ENCODE measurements at regions of chr6 and their contacts with region 1.

Region 1: DNA sequence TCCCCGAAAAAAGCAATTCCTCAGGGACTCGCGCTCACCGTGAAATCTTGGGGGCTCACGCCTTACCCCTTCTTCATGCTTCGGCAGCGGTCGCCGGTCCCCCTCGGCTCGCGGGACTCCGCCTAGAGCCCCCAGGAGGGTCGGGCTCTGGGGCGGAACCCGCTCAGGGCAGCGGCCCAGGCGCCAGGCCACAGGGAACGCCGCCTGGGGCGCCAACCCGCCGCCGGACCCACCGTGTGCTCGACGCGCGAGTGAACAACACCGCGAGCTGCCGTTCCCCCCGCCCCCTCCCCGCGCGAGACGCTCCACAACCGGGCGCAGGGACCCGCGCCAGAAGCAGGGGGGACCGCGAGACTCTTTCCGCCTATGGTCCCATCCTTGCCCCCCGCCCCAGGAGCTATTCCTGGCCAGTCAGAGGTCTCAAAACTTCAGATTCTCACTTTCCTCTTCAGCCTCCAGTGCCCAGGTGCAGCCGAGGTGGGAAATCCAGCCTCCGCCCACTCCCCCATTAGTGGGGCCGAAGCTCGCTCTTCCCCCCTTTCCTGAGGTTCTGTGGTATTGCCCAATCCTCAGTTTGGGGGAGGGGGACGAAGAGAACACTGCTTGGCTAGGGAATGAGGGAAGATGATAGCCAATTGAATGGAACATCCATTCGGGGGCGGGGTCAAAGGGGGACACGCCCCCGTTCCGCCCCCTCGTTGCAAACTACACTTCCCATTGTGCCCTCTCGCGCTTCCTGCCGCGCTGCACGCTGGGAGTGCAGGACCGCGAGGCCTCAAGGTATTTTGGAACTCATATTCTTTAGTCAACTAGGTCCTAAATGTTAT is at the start of gene WASF1:
- DNase-seq: peak; percentile 92
- ATAC-seq: peak; percentile 80
- H3K4me3 Mint-ChIP-seq: no peak within 1 kb of the TSS
- H3K27ac Mint-ChIP-seq: peak within 1 kb of the TSS; percentile 86
- H3K4me1 Mint-ChIP-seq: peaks cover 7% of the 10 kb centered on the region
- H3K27me3 Mint-ChIP-seq: no peaks in the 10 kb centered on the region
- CTCF ChIP-seq: no peak
- total RNA-seq, gene WASF1: 5.1 and 6.2 TPM in 2 replicates

Region 2: DNA sequence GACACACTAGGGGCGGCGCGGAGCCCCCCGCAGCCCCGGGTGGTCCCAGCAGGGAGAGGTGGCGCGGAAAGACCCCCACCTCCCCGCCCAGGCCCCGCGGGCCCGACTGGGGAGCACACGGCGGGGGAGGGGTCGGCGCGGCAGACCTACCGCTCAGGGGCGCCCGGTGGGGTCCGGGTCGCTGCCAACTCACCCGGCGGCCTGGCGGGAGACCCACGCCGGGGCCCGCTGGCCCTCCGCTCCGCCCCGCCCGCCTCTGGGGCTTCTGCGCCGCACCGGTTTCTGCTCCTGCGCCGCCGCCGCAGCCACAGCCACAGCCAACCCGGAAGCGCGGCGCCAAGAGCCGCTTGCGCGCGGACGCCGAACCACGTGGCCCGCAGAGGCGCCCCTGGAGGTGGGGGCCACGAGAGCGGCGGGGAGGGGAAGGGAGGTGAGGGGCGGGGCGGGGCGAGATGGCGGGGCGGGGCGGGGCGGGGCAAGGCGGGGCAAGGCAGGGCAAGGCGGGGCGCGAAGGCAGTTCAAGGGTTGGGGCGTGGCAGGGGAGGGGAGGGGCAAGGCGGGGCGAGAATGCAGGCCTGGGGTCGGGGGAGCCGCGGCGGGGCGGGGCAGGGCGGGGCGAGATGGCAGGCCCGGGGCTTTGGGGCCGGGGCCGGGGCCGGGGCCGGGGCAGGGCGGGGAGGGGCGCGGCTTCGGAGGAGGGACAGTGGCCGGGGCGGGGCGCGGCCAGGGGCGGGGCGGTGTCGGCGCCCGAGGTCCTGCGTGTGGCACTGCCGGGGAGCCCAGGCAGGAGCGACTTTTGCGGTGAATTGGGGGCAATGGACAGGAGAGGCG is 696.5 kb before region 1 on chr6 and contains the start of gene ZBTB24:
- CTCF ChIA-PET with region 1: no interaction called
- POLR2A ChIA-PET with region 1: no interaction called
- intact Hi-C with region 1: loop called (anchors 1 kb)
- DNase-seq: peak; percentile 81
- ATAC-seq: peak; percentile 82
- H3K4me3 Mint-ChIP-seq: peak within 1 kb of the TSS; percentile 95
- H3K27ac Mint-ChIP-seq: peak within 1 kb of the TSS; percentile 85
- H3K4me1 Mint-ChIP-seq: peaks cover 52% of the 10 kb centered on the region
- H3K27me3 Mint-ChIP-seq: no peaks in the 10 kb centered on the region
- CTCF ChIP-seq: no peak
- total RNA-seq, gene ZBTB24: 22.8 and 25.4 TPM in 2 replicates

Region 3: DNA sequence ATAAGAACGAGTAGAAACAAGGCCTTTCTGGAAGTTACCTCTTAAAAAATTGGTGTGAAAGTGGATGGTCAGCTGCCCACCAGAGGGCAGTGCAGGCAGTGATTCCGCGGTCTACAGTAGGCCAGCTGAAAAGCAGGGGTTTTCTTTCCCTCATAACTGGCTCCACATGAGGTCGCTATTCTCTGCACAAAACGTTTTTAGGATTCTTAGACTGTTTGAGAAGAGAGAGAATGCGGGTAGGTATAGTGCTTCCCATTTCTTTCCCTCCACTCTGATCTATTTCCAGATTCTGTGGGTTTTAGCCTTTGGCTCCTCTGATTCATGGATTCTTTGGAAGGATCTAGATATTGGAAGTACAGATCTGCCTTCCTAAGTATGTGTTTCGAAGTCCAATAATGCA is 474.4 kb before region 1 on chr6:
- CTCF ChIA-PET with region 1: no interaction called
- POLR2A ChIA-PET with region 1: no interaction called
- intact Hi-C with region 1: loop called (anchors 1 kb)
- DNase-seq: peak; percentile 70
- ATAC-seq: peak; percentile 98
- H3K4me3 Mint-ChIP-seq: no peak overlapping the region
- H3K27ac Mint-ChIP-seq: no peak overlapping the region
- H3K4me1 Mint-ChIP-seq: peaks cover 52% of the 10 kb centered on the region
- H3K27me3 Mint-ChIP-seq: no peaks in the 10 kb centered on the region
- CTCF ChIP-seq: peak; percentile 98

Region 4: DNA sequence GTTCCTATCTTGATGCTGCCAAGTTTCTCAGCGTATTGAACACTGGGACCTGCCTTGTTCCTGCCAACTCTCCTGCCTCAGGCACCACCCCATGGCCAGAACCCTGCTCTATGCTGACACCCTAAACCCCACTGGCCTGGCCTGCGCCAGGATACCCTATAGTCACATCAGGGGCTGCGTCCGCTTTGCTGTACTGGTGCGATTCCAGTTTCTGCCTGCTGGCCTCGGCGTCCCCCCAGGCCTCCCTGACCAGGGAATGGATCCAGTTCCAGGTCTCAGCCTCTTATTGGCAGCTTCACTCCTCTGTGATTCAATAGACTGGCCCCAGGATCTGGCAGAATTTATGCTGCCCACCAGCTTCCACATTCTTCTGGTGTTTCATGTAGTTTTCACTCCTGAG is 146.5 kb before region 1 on chr6:
- CTCF ChIA-PET with region 1: no interaction called
- POLR2A ChIA-PET with region 1: no interaction called
- intact Hi-C with region 1: no loop called
- DNase-seq: no peak
- ATAC-seq: no peak
- H3K4me3 Mint-ChIP-seq: no peak overlapping the region
- H3K27ac Mint-ChIP-seq: no peak overlapping the region
- H3K4me1 Mint-ChIP-seq: no peaks in the 10 kb centered on the region
- H3K27me3 Mint-ChIP-seq: no peaks in the 10 kb centered on the region
- CTCF ChIP-seq: no peak

Region 5: GRCh38 chr6:110101885-110102284 is 77.7 kb before region 1 on chr6:
- CTCF ChIA-PET with region 1: no interaction called
- POLR2A ChIA-PET with region 1: no interaction called
- intact Hi-C with region 1: loop called (anchors 5 kb)
- DNase-seq: no peak
- ATAC-seq: peak; percentile 96
- H3K4me3 Mint-ChIP-seq: no peak overlapping the region
- H3K27ac Mint-ChIP-seq: peak overlapping the region; percentile 53
- H3K4me1 Mint-ChIP-seq: peaks cover 11% of the 10 kb centered on the region
- H3K27me3 Mint-ChIP-seq: no peaks in the 10 kb centered on the region
- CTCF ChIP-seq: no peak

Region 6: GRCh38 chr6:110207652-110208051 is 28.0 kb after region 1 on chr6:
- CTCF ChIA-PET with region 1: interaction called, 33 read pairs
- POLR2A ChIA-PET with region 1: interaction called, 86 read pairs
- intact Hi-C with region 1: loop called (anchors 1 kb)
- DNase-seq: no peak
- ATAC-seq: no peak
- H3K4me3 Mint-ChIP-seq: no peak overlapping the region
- H3K27ac Mint-ChIP-seq: no peak overlapping the region
- H3K4me1 Mint-ChIP-seq: peaks cover 46% of the 10 kb centered on the region
- H3K27me3 Mint-ChIP-seq: no peaks in the 10 kb centered on the region
- CTCF ChIP-seq: no peak

Region 7: GRCh38 chr6:110233770-110234374 is 54.3 kb after region 1 on chr6:
- CTCF ChIA-PET with region 1: interaction called, 4 read pairs
- POLR2A ChIA-PET with region 1: interaction called, 4 read pairs
- intact Hi-C with region 1: loop called (anchors 1 kb)
- DNase-seq: no peak
- ATAC-seq: peak; percentile 78
- H3K4me3 Mint-ChIP-seq: no peak overlapping the region
- H3K27ac Mint-ChIP-seq: peak overlapping the region; percentile 46
- H3K4me1 Mint-ChIP-seq: peaks cover 13% of the 10 kb centered on the region
- H3K27me3 Mint-ChIP-seq: no peaks in the 10 kb centered on the region
- CTCF ChIP-seq: no peak

Region 8: GRCh38 chr6:110389689-110390382 is 210.2 kb after region 1 on chr6:
- CTCF ChIA-PET with region 1: interaction called, 45 read pairs
- POLR2A ChIA-PET with region 1: interaction called, 3 read pairs
- intact Hi-C with region 1: loop called (anchors 1 kb)
- DNase-seq: no peak
- ATAC-seq: no peak
- H3K4me3 Mint-ChIP-seq: no peak overlapping the region
- H3K27ac Mint-ChIP-seq: no peak overlapping the region
- H3K4me1 Mint-ChIP-seq: no peaks in the 10 kb centered on the region
- H3K27me3 Mint-ChIP-seq: no peaks in the 10 kb centered on the region
- CTCF ChIP-seq: no peak

Measured in activated B cell treated with CpG ODN at 0.5 μM for 24 hours (primary cell).